ENCODE measurements at regions of chr1 and their contacts with region 1.

Region 1: GRCh38 chr1:40553017-40553416 is 21.6 kb downstream of the ZNF684 start:
- DNase-seq: no peak
- ATAC-seq: no peak
- H3K4me3 Mint-ChIP-seq: no peak overlapping the region
- H3K27ac Mint-ChIP-seq: no peak overlapping the region
- H3K4me1 Mint-ChIP-seq: no peaks in the 10 kb centered on the region
- H3K27me3 Mint-ChIP-seq: peaks cover 1% of the 10 kb centered on the region
- CTCF ChIP-seq: no peak

Region 2: GRCh38 chr1:39590551-39590950 is 962.5 kb before region 1 on chr1:
- CTCF ChIA-PET with region 1: no interaction called
- POLR2A ChIA-PET with region 1: no interaction called
- intact Hi-C with region 1: no loop called
- DNase-seq: no peak
- ATAC-seq: no peak
- H3K4me3 Mint-ChIP-seq: no peak overlapping the region
- H3K27ac Mint-ChIP-seq: no peak overlapping the region
- H3K4me1 Mint-ChIP-seq: no peaks in the 10 kb centered on the region
- H3K27me3 Mint-ChIP-seq: no peaks in the 10 kb centered on the region
- CTCF ChIP-seq: no peak

Region 3: GRCh38 chr1:40563266-40563665 is 10.2 kb after region 1 on chr1:
- CTCF ChIA-PET with region 1: no interaction called
- POLR2A ChIA-PET with region 1: no interaction called
- intact Hi-C with region 1: loop called (anchors 1 kb)
- DNase-seq: no peak
- ATAC-seq: no peak
- H3K4me3 Mint-ChIP-seq: no peak overlapping the region
- H3K27ac Mint-ChIP-seq: no peak overlapping the region
- H3K4me1 Mint-ChIP-seq: no peaks in the 10 kb centered on the region
- H3K27me3 Mint-ChIP-seq: peaks cover 2% of the 10 kb centered on the region
- CTCF ChIP-seq: no peak